ENCODE measurements at regions of chr22 and their contacts with region 1.

Region 1: GRCh38 chr22:37282385-37282677 is at the start of gene CYTH4:
- DNase-seq: peak; percentile 86
- ATAC-seq: peak; percentile 89
- H3K4me3 Mint-ChIP-seq: peak within 1 kb of the TSS; percentile 84
- H3K27ac Mint-ChIP-seq: peak within 1 kb of the TSS; percentile 98
- H3K4me1 Mint-ChIP-seq: peaks cover 70% of the 10 kb centered on the region
- H3K27me3 Mint-ChIP-seq: peaks cover 7% of the 10 kb centered on the region
- total RNA-seq, gene CYTH4: 107 to 114 TPM

Region 2: GRCh38 chr22:37295213-37295886 is 13.0 kb after region 1 on chr22:
- CTCF ChIA-PET with region 1: interaction called, 14 read pairs
- POLR2A ChIA-PET with region 1: interaction called, 11 read pairs
- DNase-seq: peak; percentile 34
- ATAC-seq: peak; percentile 29
- H3K4me3 Mint-ChIP-seq: no peak overlapping the region
- H3K27ac Mint-ChIP-seq: peak overlapping the region; percentile 78
- H3K4me1 Mint-ChIP-seq: peaks cover 90% of the 10 kb centered on the region
- H3K27me3 Mint-ChIP-seq: no peaks in the 10 kb centered on the region

Region 3: DNA sequence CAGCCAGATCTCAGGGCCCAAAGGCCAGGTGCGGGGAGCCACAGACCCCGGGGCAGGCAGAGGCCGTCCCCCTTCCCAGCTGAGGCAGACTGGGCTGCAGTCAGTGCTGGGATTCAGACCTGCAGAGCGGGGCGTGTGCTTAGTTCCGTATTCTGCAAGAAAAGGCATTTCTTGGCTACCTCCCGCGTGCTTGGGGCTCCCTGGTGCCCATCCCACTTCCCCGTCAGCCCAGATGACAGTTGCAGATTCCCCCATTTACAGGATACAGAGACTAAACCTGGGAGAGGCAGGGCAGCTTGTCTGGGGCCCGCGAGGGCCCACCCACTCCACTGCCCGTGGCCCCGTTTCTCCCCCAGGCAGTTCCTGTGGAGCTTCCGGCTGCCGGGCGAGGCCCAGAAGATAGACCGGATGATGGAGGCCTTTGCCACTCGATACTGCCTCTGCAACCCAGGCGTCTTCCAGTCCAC is 18.3 kb after region 1 on chr22:
- CTCF ChIA-PET with region 1: interaction called, 14 read pairs
- POLR2A ChIA-PET with region 1: interaction called, 11 read pairs
- DNase-seq: peak; percentile 69
- ATAC-seq: peak; percentile 74
- H3K4me3 Mint-ChIP-seq: peak overlapping the region; percentile 72
- H3K27ac Mint-ChIP-seq: peak overlapping the region; percentile 97
- H3K4me1 Mint-ChIP-seq: peaks cover 97% of the 10 kb centered on the region
- H3K27me3 Mint-ChIP-seq: no peaks in the 10 kb centered on the region

Region 4: GRCh38 chr22:37309211-37310074 is 27.1 kb after region 1 on chr22:
- CTCF ChIA-PET with region 1: interaction called, 8 read pairs
- POLR2A ChIA-PET with region 1: interaction called, 14 read pairs
- DNase-seq: peak; percentile 86
- ATAC-seq: peak; percentile 48
- H3K4me3 Mint-ChIP-seq: peak overlapping the region; percentile 45
- H3K27ac Mint-ChIP-seq: peak overlapping the region; percentile 96
- H3K4me1 Mint-ChIP-seq: peaks cover 95% of the 10 kb centered on the region
- H3K27me3 Mint-ChIP-seq: no peaks in the 10 kb centered on the region

Measured in activated CD8-positive, alpha-beta T cell treated with anti-CD3 and anti-CD28 coated beads, Interleukin-2, amount 10 ng/mL, durations not matched to agents 7 days and 5 days (primary cell).